ENCODE measurements at regions of chr9 and their contacts with region 1.

Region 1: DNA sequence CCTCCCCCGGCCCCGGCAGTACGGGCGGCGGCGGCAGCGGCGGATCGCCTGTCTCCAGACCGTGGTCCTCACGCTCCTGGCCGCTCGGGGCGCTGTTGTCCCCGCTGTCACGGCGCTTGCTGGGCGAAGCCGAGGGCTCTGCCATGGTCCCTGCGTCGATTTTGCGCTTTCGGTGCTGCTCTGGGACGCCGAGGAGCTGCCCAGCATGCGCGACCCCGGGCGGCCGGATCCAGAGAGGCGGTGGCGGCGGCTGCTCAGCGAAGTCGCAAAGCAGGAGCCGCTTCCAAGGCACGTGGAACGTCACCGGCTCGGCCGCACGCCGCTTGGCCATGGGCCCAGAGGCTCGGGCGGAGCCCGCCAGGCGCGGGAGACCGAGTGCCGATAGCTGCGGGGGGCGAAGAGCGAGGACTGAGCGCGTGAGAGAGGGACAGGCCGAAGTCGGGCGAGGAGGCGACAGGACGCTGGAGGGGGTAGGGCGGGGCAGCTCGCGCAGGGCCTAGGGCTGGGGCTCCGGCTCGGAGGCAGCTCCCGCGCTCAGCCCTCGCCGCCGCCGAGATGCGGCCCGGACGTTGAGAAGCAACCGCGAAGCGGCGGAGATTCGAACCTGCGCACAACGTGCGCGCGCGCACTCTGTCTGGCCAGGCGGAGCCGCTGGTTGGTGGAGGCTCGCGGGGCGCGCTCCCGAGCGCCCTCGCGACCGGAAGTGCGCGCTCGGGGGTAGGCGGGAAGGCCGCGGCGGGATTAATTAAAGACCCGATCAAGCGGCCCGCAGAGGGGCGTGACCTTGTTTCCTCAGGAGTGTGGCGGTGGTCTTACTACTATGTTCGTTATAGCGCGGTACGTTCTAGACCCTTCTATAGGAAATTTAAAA is at the start of gene C9orf40:
- DNase-seq: peak; percentile 91
- ATAC-seq: peak; percentile 93
- H3K4me3 Mint-ChIP-seq: peak within 1 kb of the TSS; percentile 92
- H3K27ac Mint-ChIP-seq: peak within 1 kb of the TSS; percentile 88
- H3K4me1 Mint-ChIP-seq: peaks cover 30% of the 10 kb centered on the region
- H3K27me3 Mint-ChIP-seq: no peaks in the 10 kb centered on the region
- CTCF ChIP-seq: peak; percentile 89
- total RNA-seq, gene C9orf40: 18.6 to 20.9 TPM

Region 2: GRCh38 chr9:74963056-74963455 is 10.5 kb after region 1 on chr9:
- CTCF ChIA-PET with region 1: interaction called, 10 read pairs
- POLR2A ChIA-PET with region 1: interaction called, 6 read pairs
- intact Hi-C with region 1: no loop called
- DNase-seq: no peak
- ATAC-seq: no peak
- H3K4me3 Mint-ChIP-seq: no peak overlapping the region
- H3K27ac Mint-ChIP-seq: no peak overlapping the region
- H3K4me1 Mint-ChIP-seq: no peaks in the 10 kb centered on the region
- H3K27me3 Mint-ChIP-seq: no peaks in the 10 kb centered on the region
- CTCF ChIP-seq: no peak

Region 3: GRCh38 chr9:75027187-75028107 is 74.9 kb after region 1 on chr9:
- CTCF ChIA-PET with region 1: interaction called, 23 read pairs
- POLR2A ChIA-PET with region 1: interaction called, 10 read pairs
- intact Hi-C with region 1: loop called (anchors 2 kb)
- DNase-seq: peak; percentile 66
- ATAC-seq: peak; percentile 29
- H3K4me3 Mint-ChIP-seq: peak overlapping the region; percentile 99
- H3K27ac Mint-ChIP-seq: peak overlapping the region; percentile 97
- H3K4me1 Mint-ChIP-seq: peaks cover 36% of the 10 kb centered on the region
- H3K27me3 Mint-ChIP-seq: no peaks in the 10 kb centered on the region
- CTCF ChIP-seq: peak; percentile 15

Region 4: GRCh38 chr9:75088260-75088905 is 135.9 kb after region 1 on chr9 and contains the start of gene OSTF1:
- CTCF ChIA-PET with region 1: interaction called, 4 read pairs
- POLR2A ChIA-PET with region 1: interaction called, 5 read pairs
- intact Hi-C with region 1: loop called (anchors 5 kb)
- DNase-seq: peak; percentile 94
- ATAC-seq: peak; percentile 86
- H3K4me3 Mint-ChIP-seq: peak within 1 kb of the TSS; percentile 94
- H3K27ac Mint-ChIP-seq: peak within 1 kb of the TSS; percentile 97
- H3K4me1 Mint-ChIP-seq: peaks cover 61% of the 10 kb centered on the region
- H3K27me3 Mint-ChIP-seq: no peaks in the 10 kb centered on the region
- CTCF ChIP-seq: no peak
- total RNA-seq, gene OSTF1: 52.2 to 55.3 TPM